ENCODE measurements at regions of chr7 and their contacts with region 1.

Region 1: DNA sequence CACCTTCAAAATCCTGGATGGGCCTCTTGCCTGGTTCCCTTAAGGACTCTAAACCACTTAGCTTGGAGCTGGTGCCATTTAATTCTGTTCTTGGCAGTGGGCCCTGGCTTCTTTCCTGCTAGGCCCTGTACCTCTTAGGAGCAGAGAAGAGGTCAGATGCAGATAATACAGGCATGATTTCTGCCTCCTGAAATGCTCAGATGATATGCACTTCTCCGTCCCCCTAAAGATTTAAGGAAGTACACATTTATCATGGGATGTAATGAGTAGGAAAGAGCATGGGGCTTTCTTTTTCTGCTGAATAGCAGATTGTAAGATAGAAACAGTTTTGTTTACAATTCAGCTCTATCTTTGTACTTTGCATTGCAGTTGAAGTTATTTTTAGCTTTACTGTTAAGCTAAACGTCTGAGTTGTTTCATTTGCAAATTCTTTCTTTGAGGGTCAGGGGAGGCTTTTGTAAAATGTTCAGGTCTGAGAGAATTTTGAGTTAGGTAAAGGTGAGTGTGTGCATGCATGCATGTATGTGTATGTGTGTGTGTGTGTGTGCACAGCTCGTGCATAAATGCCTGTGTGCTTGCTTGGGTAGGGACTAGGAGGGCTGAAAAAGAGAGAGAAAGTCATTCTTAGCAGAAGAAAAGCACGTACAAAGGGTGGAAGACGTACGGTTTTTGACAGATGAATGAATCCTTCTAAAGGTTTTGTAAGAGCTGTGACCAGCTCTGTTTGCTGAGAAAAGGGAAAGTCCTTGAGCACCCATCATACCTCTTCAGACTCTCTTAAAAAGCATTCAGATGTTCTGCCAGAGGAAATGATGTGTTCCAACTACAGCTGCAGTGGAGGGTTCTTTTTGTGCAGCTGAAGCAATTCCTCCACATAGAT is 364.2 kb downstream of the AUTS2 start:
- DNase-seq: peak; percentile 81
- H3K4me3 ChIP-seq: peak overlapping the region; percentile 57
- H3K27ac ChIP-seq: peak overlapping the region; percentile 93
- H3K4me1 ChIP-seq: peaks cover 79% of the 10 kb centered on the region
- CTCF ChIP-seq: no peak

Region 2: DNA sequence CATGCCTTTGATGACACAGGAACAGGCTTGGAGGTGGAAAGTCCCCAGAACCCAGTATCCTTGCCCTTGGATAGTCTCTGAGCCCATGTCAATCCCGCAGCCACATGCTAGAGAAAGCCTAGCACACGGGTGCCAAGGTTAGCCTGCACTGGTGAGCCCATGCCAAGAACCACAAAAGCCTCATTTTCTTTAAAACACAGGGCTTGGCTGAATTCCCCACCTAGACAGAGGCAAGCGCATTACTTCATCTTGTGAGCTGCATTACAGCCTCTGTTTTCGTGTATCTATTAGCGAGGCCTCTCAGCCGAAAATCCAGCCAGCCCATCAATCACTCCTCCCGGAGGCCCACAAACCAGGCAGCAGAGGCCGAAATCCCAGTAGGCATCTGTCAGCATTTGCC is 679.0 kb before region 1 on chr7:
- CTCF ChIA-PET with region 1: no interaction called
- POLR2A ChIA-PET with region 1: no interaction called
- intact Hi-C with region 1: no loop called
- DNase-seq: no peak
- H3K4me3 ChIP-seq: no peak overlapping the region
- H3K27ac ChIP-seq: no peak overlapping the region
- H3K4me1 ChIP-seq: no peaks in the 10 kb centered on the region
- CTCF ChIP-seq: no peak

Region 3: GRCh38 chr7:69977590-69977989 is 15.2 kb after region 1 on chr7:
- CTCF ChIA-PET with region 1: no interaction called
- POLR2A ChIA-PET with region 1: interaction called, 14 read pairs
- intact Hi-C with region 1: no loop called
- DNase-seq: no peak
- H3K4me3 ChIP-seq: no peak overlapping the region
- H3K27ac ChIP-seq: no peak overlapping the region
- H3K4me1 ChIP-seq: no peaks in the 10 kb centered on the region
- CTCF ChIP-seq: no peak

Region 4: GRCh38 chr7:70082099-70082611 is 119.7 kb after region 1 on chr7:
- CTCF ChIA-PET with region 1: no interaction called
- POLR2A ChIA-PET with region 1: no interaction called
- intact Hi-C with region 1: no loop called
- DNase-seq: no peak
- H3K4me3 ChIP-seq: no peak overlapping the region
- H3K27ac ChIP-seq: no peak overlapping the region
- H3K4me1 ChIP-seq: no peaks in the 10 kb centered on the region
- CTCF ChIP-seq: no peak

Region 5: DNA sequence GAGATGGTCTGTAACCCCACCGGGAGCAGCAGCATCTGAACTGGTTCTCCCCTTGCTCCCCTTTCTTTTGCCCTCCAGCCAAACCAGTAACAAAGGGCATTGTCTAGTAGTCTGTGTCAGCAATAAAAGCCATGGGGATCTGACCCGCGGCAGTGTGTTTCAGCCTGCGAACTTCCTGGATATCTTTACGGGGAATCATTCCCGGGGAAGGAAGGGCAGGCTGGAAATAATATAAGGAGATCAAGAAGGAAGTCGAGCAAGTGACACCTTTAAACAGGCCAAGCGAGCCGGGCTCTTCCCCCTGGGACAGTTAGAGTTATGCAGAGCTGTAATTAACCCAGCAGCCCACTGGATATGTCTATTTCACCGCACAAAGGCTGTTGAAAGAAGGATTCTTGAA is 508.3 kb after region 1 on chr7:
- CTCF ChIA-PET with region 1: no interaction called
- POLR2A ChIA-PET with region 1: no interaction called
- intact Hi-C with region 1: no loop called
- DNase-seq: no peak
- H3K4me3 ChIP-seq: no peak overlapping the region
- H3K27ac ChIP-seq: no peak overlapping the region
- H3K4me1 ChIP-seq: no peaks in the 10 kb centered on the region
- CTCF ChIP-seq: no peak

Measured in OCI-LY7 (cell line).